ENCODE measurements at regions of chr3 and their contacts with region 1.

Region 1: GRCh38 chr3:184261270-184261853 is at the start of gene CAMK2N2:
- DNase-seq: peak; percentile 50
- H3K4me3 Mint-ChIP-seq: peak within 1 kb of the TSS; percentile 83
- H3K27ac Mint-ChIP-seq: peak within 1 kb of the TSS; percentile 78
- H3K4me1 Mint-ChIP-seq: peaks cover 17% of the 10 kb centered on the region
- H3K27me3 Mint-ChIP-seq: peaks cover 37% of the 10 kb centered on the region
- total RNA-seq, gene CAMK2N2: 0.15 and 0.52 TPM in 2 replicates

Region 2: GRCh38 chr3:184229394-184230080 is 31.8 kb before region 1 on chr3 and contains the start of gene VWA5B2:
- intact Hi-C with region 1: loop called (anchors 5 kb)
- DNase-seq: peak; percentile 54
- H3K4me3 Mint-ChIP-seq: peak within 1 kb of the TSS; percentile 49
- H3K27ac Mint-ChIP-seq: no peak within 1 kb of the TSS
- H3K4me1 Mint-ChIP-seq: peaks cover 14% of the 10 kb centered on the region
- H3K27me3 Mint-ChIP-seq: peaks cover 52% of the 10 kb centered on the region
- total RNA-seq, gene VWA5B2: not detected in 2 replicates

Region 3: DNA sequence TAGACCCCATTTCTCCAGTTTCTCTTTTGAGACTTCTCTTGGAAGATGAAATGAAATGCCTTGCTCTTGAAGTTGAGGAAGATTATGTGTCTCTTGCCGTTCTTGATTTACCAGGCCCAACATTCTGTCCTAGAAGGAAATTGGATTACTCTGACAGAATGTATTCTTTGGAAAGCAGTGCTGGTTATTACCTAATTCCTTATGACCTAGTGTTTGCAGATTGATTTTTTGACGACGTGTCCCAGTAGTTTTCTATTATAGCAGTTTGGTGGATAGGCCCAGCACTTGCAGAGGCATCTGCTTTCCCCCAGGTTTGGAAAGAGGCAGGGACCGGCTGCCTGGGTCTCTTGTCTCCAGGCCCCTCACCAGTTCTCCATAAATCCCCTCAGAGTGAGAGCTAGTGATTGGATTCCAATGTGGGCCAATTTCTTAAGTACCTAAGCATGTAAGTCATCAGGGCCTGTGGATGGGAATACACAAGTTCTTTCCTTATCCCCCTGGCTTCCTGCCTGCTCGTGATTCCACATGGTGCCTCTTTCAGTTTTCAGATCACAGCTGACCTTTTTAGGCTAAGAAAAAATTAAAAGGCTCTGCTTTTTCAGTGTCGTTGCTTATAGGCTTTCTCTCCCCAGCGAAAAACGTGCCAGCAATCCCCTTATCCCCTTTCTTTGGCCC is 350.4 kb after region 1 on chr3:
- intact Hi-C with region 1: no loop called
- DNase-seq: no peak
- H3K4me3 Mint-ChIP-seq: no peak overlapping the region
- H3K27ac Mint-ChIP-seq: no peak overlapping the region
- H3K4me1 Mint-ChIP-seq: peaks cover 5% of the 10 kb centered on the region
- H3K27me3 Mint-ChIP-seq: peaks cover 18% of the 10 kb centered on the region

Region 4: GRCh38 chr3:184635126-184635525 is 373.8 kb after region 1 on chr3:
- intact Hi-C with region 1: no loop called
- DNase-seq: no peak
- H3K4me3 Mint-ChIP-seq: no peak overlapping the region
- H3K27ac Mint-ChIP-seq: peak overlapping the region; percentile 71
- H3K4me1 Mint-ChIP-seq: no peaks in the 10 kb centered on the region
- H3K27me3 Mint-ChIP-seq: peaks cover 4% of the 10 kb centered on the region